ENCODE measurements at regions of chr17 and their contacts with region 1.

Region 1: GRCh38 chr17:63611354-63611753 is 10.7 kb downstream of the TACO1 start:
- DNase-seq: no peak
- ATAC-seq: no peak
- H3K4me3 Mint-ChIP-seq: no peak overlapping the region
- H3K27ac Mint-ChIP-seq: no peak overlapping the region
- H3K4me1 Mint-ChIP-seq: no peaks in the 10 kb centered on the region
- H3K27me3 Mint-ChIP-seq: no peaks in the 10 kb centered on the region
- CTCF ChIP-seq: no peak

Region 2: GRCh38 chr17:63419949-63420867 is 191.1 kb before region 1 on chr17:
- CTCF ChIA-PET with region 1: interaction called, 141 read pairs
- POLR2A ChIA-PET with region 1: interaction called, 3 read pairs
- intact Hi-C with region 1: loop called (anchors 1 kb)
- DNase-seq: no peak
- ATAC-seq: no peak
- H3K4me3 Mint-ChIP-seq: no peak overlapping the region
- H3K27ac Mint-ChIP-seq: no peak overlapping the region
- H3K4me1 Mint-ChIP-seq: no peaks in the 10 kb centered on the region
- H3K27me3 Mint-ChIP-seq: peaks cover 2% of the 10 kb centered on the region
- CTCF ChIP-seq: no peak

Region 3: DNA sequence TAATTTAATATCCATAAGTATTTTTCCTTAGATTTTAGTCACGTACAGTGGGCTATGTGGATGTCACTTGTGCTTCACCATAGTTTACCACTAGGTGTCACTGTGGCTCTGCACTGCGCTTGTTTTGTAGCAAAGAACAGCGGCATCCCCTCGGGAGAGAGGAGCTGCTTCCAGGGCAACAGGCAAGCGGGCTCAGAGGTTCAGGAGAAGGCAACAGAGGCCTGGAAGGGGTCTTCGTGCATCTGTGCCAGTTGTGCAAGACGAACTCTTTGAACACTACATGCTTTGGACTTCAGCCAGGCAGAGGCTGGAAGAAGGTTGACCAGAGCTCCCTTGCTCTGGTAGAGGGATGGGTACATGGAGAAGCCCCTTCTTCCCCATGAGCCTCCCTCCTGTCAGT is 185.9 kb before region 1 on chr17:
- CTCF ChIA-PET with region 1: interaction called, 141 read pairs
- POLR2A ChIA-PET with region 1: interaction called, 3 read pairs
- intact Hi-C with region 1: loop called (anchors 1 kb)
- DNase-seq: peak; percentile 56
- ATAC-seq: peak; percentile 86
- H3K4me3 Mint-ChIP-seq: no peak overlapping the region
- H3K27ac Mint-ChIP-seq: no peak overlapping the region
- H3K4me1 Mint-ChIP-seq: peaks cover 8% of the 10 kb centered on the region
- H3K27me3 Mint-ChIP-seq: peaks cover 2% of the 10 kb centered on the region
- CTCF ChIP-seq: peak; percentile 96

Region 4: GRCh38 chr17:63478791-63479494 is 132.4 kb before region 1 on chr17:
- CTCF ChIA-PET with region 1: interaction called, 16 read pairs
- POLR2A ChIA-PET with region 1: no interaction called
- intact Hi-C with region 1: loop called (anchors 1 kb)
- DNase-seq: peak; percentile 59
- ATAC-seq: peak; percentile 80
- H3K4me3 Mint-ChIP-seq: peak overlapping the region; percentile 54
- H3K27ac Mint-ChIP-seq: no peak overlapping the region
- H3K4me1 Mint-ChIP-seq: peaks cover 17% of the 10 kb centered on the region
- H3K27me3 Mint-ChIP-seq: peaks cover 32% of the 10 kb centered on the region
- CTCF ChIP-seq: no peak

Region 5: DNA sequence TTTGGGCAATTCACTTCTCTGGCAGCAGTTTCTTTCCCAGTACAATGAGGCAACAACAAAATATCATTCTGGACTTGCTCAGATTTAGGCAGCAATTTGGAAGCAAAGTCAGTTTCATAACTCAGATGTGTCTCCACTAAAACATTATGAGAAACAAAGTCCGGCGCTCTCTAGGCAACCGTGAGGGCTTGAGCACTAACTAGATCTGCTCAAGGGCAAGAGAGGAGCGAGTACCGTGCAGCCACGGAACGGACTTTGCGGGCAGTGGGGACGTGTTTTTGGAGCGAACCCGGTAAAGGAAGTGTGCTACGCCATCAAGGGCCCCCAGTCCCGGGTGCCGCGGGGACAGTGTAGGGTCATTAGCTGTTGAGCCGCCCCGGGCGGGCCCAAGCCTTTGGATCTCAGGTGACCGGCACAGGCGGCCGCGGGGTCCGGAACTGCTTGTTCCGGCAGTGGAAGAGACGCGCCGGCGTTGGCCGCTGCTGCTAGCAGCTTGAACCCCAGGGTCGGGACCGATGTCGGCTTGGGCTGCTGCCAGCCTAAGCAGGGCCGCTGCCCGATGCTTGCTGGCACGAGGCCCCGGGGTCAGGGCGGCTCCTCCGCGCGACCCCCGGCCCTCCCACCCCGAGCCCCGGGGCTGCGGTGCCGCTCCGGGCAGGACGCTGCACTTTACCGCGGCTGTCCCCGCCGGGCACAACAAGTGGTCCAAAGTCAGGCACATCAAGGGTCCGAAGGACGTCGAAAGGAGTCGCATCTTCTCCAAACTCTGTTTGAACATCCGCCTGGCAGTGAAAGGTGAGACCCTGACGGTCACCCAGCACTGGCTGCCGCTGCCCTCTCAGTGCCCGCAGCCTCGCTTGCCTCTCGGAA is 10.6 kb before region 1 on chr17 and contains the start of gene TACO1:
- CTCF ChIA-PET with region 1: interaction called, 17 read pairs
- POLR2A ChIA-PET with region 1: interaction called, 4 read pairs
- intact Hi-C with region 1: no loop called
- DNase-seq: peak; percentile 80
- ATAC-seq: peak; percentile 99
- H3K4me3 Mint-ChIP-seq: peak within 1 kb of the TSS; percentile 89
- H3K27ac Mint-ChIP-seq: peak within 1 kb of the TSS; percentile 76
- H3K4me1 Mint-ChIP-seq: peaks cover 17% of the 10 kb centered on the region
- H3K27me3 Mint-ChIP-seq: no peaks in the 10 kb centered on the region
- CTCF ChIP-seq: no peak
- total RNA-seq, gene TACO1: 19.1 and 23.5 TPM in 2 replicates

Region 6: GRCh38 chr17:63714547-63715277 is 103.4 kb after region 1 on chr17:
- CTCF ChIA-PET with region 1: interaction called, 13 read pairs
- POLR2A ChIA-PET with region 1: interaction called, 4 read pairs
- intact Hi-C with region 1: loop called (anchors 1 kb)
- DNase-seq: no peak
- ATAC-seq: no peak
- H3K4me3 Mint-ChIP-seq: no peak overlapping the region
- H3K27ac Mint-ChIP-seq: no peak overlapping the region
- H3K4me1 Mint-ChIP-seq: peaks cover 7% of the 10 kb centered on the region
- H3K27me3 Mint-ChIP-seq: no peaks in the 10 kb centered on the region
- CTCF ChIP-seq: no peak

Region 7: DNA sequence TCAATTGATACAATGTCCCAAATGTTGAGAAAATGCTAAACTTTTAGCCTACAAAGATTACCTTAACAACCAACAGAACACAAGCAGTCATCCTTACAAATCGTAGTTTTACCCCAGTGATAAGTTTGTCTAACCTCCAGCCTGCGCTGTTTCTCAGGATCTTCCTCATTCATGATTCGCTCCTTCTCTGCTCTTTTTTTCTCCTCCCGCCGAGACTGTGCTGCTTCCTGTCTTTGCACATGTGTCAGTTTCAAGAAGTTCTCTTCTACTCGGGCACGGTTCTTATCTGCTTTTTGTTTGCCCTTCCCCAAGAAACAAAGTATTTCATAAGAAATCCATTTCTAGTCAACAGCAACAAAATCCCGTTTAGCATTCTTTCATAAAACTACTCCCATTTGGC is 140.5 kb after region 1 on chr17:
- CTCF ChIA-PET with region 1: no interaction called
- POLR2A ChIA-PET with region 1: no interaction called
- intact Hi-C with region 1: no loop called
- DNase-seq: no peak
- ATAC-seq: peak; percentile 77
- H3K4me3 Mint-ChIP-seq: peak overlapping the region; percentile 48
- H3K27ac Mint-ChIP-seq: peak overlapping the region; percentile 77
- H3K4me1 Mint-ChIP-seq: peaks cover 9% of the 10 kb centered on the region
- H3K27me3 Mint-ChIP-seq: no peaks in the 10 kb centered on the region
- CTCF ChIP-seq: no peak

Region 8: GRCh38 chr17:63834431-63835166 is 223.2 kb after region 1 on chr17:
- CTCF ChIA-PET with region 1: no interaction called
- POLR2A ChIA-PET with region 1: interaction called, 5 read pairs
- intact Hi-C with region 1: loop called (anchors 2 kb)
- DNase-seq: no peak
- ATAC-seq: peak; percentile 88
- H3K4me3 Mint-ChIP-seq: no peak overlapping the region
- H3K27ac Mint-ChIP-seq: peak overlapping the region; percentile 65
- H3K4me1 Mint-ChIP-seq: peaks cover 56% of the 10 kb centered on the region
- H3K27me3 Mint-ChIP-seq: no peaks in the 10 kb centered on the region
- CTCF ChIP-seq: no peak

Measured in activated B cell treated with CpG ODN at 0.5 μM for 24 hours (primary cell).